ENCODE measurements at regions of chr5 and their contacts with region 1.

Region 1: DNA sequence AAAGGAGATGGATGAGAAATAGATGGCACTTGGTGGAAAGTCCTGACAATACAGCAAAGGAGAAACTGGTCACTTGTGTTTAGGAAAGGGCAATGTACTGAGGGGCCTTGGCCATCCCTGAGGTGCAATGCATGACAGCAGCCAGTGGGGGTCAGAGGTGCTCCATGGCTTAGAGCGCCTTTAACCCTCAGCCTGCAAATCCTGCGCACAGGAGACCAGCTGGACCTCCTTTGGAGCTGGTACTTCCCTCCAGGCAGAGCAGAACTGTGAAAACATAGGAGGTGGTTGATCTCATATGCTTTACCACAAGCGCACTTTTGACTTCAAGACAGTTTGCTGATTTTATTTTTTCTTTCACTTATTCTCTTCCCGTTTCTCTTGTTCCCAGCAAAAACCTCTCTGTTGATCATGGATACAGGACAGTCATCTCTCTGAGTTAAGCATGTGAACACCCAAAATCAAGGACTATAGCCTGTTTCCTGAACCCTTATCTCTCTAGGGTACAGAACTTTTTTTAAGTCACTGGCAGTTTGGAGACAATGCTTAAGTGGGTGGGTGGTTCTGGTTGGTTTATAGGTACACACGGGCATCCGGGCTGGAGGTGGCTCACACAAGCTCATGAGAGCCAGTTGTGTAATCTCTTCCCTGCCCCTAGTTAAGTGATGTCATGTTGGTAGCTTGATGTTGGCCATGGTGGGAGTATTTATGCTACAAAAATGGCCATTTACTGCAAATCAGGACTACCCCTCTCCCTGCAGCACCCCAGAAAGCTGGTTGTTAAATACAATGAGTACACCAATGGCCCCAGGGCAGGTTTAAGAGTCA is 37.6 kb upstream of the ANKRD55 start:
- DNase-seq: peak; percentile 89
- H3K4me3 Mint-ChIP-seq: peak overlapping the region; percentile 31
- H3K27ac Mint-ChIP-seq: peak overlapping the region; percentile 82
- H3K4me1 Mint-ChIP-seq: peaks cover 20% of the 10 kb centered on the region
- H3K27me3 Mint-ChIP-seq: no peaks in the 10 kb centered on the region

Region 2: GRCh38 chr5:55850839-55851674 is 419.7 kb before region 1 on chr5 and contains the start of gene IL31RA:
- CTCF ChIA-PET with region 1: no interaction called
- POLR2A ChIA-PET with region 1: no interaction called
- intact Hi-C with region 1: no loop called
- DNase-seq: no peak
- H3K4me3 Mint-ChIP-seq: no peak within 1 kb of the TSS
- H3K27ac Mint-ChIP-seq: no peak within 1 kb of the TSS
- H3K4me1 Mint-ChIP-seq: peaks cover 25% of the 10 kb centered on the region
- H3K27me3 Mint-ChIP-seq: peaks cover 3% of the 10 kb centered on the region
- total RNA-seq, gene IL31RA: 0.21 to 0.29 TPM

Region 3: GRCh38 chr5:55936100-55936693 is 334.6 kb before region 1 on chr5:
- CTCF ChIA-PET with region 1: interaction called, 14 read pairs
- POLR2A ChIA-PET with region 1: no interaction called
- intact Hi-C with region 1: loop called (anchors 5 kb)
- DNase-seq: peak; percentile 88
- H3K4me3 Mint-ChIP-seq: no peak overlapping the region
- H3K27ac Mint-ChIP-seq: peak overlapping the region; percentile 21
- H3K4me1 Mint-ChIP-seq: peaks cover 9% of the 10 kb centered on the region
- H3K27me3 Mint-ChIP-seq: no peaks in the 10 kb centered on the region

Region 4: DNA sequence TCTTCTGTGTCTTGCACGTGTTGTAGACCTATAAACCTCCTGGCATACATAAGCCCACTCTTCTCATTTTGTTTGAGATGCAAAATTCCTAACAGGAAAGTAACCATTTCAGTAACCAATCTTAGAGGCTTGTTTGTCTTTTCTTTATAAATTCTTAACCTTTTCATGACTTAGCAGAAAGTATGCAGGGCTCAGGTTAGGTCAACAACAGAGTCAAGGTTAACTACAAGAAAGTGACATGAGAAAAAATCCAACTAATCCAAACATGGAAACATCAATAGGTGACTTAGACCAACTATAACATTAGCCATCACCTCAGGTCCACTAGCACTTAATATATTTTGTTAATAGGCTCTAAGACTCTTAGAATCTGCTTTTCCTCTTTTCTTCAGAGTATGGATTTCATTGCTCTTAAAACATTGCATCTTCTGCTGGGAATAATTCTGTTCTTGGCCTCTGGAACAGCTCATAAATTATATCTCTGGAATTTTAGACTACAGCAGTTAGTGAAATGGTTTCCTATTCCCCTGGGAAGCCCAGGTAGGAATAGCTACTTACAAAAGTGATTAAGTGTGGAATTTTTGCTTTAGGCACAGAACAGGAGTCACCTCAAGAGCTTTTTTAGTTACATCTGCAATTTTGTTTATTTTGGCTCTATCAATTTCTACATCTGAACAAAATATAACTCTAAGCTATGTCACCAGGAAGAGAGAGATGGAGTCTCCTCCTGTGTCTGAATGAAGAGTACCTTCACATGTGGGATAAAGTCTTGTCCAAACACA is 117.6 kb after region 1 on chr5:
- CTCF ChIA-PET with region 1: interaction called, 3 read pairs
- POLR2A ChIA-PET with region 1: no interaction called
- intact Hi-C with region 1: loop called (anchors 1 kb)
- DNase-seq: no peak
- H3K4me3 Mint-ChIP-seq: no peak overlapping the region
- H3K27ac Mint-ChIP-seq: no peak overlapping the region
- H3K4me1 Mint-ChIP-seq: no peaks in the 10 kb centered on the region
- H3K27me3 Mint-ChIP-seq: no peaks in the 10 kb centered on the region

Region 5: DNA sequence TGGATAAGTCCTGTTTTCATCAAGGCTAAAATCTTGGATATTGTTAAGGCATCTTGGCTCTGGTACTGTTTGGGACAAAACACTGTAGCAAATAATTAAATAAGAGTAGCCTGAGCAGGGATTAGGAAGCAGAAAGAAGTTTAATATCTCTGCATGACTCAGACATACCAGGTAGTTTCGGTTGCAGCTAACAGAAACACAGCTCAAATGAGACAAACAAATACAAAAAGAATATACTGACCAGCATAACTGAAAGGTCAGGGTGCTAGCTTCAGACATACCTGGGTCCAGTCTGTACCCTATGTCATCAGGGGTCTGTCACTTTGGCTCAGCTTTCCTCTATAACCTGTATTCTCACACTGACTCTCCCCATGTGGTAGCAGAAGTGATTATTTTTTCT is 388.2 kb after region 1 on chr5:
- CTCF ChIA-PET with region 1: no interaction called
- POLR2A ChIA-PET with region 1: no interaction called
- intact Hi-C with region 1: no loop called
- DNase-seq: no peak
- H3K4me3 Mint-ChIP-seq: no peak overlapping the region
- H3K27ac Mint-ChIP-seq: no peak overlapping the region
- H3K4me1 Mint-ChIP-seq: peaks cover 27% of the 10 kb centered on the region
- H3K27me3 Mint-ChIP-seq: no peaks in the 10 kb centered on the region

Region 6: DNA sequence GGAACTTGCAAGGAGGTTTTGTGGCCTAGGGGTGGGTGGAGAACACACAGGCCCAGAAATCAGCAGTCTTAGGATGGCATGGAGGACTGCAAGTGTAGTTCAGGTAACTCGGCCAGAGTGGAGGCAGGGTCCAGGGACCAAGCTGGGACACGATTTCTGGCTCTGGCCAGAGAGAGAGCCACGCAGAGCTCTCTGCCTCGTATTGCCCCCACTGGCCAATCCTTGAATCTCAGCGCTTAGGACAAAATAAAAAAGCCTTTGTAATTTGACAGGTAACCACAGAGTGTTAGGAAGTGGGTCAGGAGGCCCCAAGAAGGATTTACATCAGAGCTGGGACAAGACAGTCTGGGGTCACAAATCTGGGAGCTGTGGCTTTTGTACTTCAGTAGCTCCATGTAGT is 556.3 kb after region 1 on chr5:
- CTCF ChIA-PET with region 1: interaction called, 172 read pairs
- POLR2A ChIA-PET with region 1: no interaction called
- intact Hi-C with region 1: no loop called
- DNase-seq: peak; percentile 25
- H3K4me3 Mint-ChIP-seq: peak overlapping the region; percentile 2
- H3K27ac Mint-ChIP-seq: peak overlapping the region; percentile 80
- H3K4me1 Mint-ChIP-seq: peaks cover 90% of the 10 kb centered on the region
- H3K27me3 Mint-ChIP-seq: no peaks in the 10 kb centered on the region

Region 7: DNA sequence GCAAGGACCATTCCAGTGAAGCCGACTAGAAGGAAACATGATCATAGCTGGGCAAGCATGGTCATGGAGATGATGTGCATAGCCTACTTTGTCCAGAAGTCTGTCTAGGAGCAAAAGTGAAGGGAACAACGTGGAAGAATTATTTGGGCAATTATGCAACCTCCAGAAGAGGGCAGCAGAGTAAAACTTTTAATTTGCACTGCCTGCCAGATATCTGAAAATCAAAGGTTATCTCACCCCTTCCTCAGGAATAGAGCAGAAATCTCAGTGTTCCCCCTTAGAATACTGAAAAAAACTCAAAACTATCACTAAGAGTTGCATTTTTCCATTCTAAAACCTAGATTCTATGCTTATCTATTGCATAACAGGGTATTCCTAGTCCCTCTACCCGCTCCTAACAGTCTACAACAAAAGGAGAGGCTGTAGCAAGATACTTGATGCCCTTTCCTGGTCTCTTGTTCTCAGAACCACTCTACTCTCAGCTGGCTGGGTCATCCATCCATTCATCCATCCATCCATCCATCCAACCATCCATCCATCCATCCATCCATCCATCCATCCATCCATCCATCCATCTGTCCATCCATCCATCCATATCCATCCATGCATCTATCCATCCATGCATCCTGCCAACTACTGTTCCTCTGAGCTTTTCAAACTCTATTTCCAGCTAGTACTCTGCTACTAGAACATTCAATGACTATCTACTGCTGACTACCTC is 630.2 kb after region 1 on chr5:
- CTCF ChIA-PET with region 1: interaction called, 12 read pairs
- POLR2A ChIA-PET with region 1: no interaction called
- intact Hi-C with region 1: loop called (anchors 2 kb)
- DNase-seq: peak; percentile 24
- H3K4me3 Mint-ChIP-seq: no peak overlapping the region
- H3K27ac Mint-ChIP-seq: no peak overlapping the region
- H3K4me1 Mint-ChIP-seq: peaks cover 5% of the 10 kb centered on the region
- H3K27me3 Mint-ChIP-seq: no peaks in the 10 kb centered on the region

Region 8: GRCh38 chr5:57221049-57221568 is 950.3 kb after region 1 on chr5:
- CTCF ChIA-PET with region 1: no interaction called
- POLR2A ChIA-PET with region 1: no interaction called
- intact Hi-C with region 1: loop called (anchors 5 kb)
- DNase-seq: no peak
- H3K4me3 Mint-ChIP-seq: no peak overlapping the region
- H3K27ac Mint-ChIP-seq: peak overlapping the region; percentile 56
- H3K4me1 Mint-ChIP-seq: peaks cover 51% of the 10 kb centered on the region
- H3K27me3 Mint-ChIP-seq: no peaks in the 10 kb centered on the region